ENCODE measurements at regions of chr9 and their contacts with region 1.

Region 1: DNA sequence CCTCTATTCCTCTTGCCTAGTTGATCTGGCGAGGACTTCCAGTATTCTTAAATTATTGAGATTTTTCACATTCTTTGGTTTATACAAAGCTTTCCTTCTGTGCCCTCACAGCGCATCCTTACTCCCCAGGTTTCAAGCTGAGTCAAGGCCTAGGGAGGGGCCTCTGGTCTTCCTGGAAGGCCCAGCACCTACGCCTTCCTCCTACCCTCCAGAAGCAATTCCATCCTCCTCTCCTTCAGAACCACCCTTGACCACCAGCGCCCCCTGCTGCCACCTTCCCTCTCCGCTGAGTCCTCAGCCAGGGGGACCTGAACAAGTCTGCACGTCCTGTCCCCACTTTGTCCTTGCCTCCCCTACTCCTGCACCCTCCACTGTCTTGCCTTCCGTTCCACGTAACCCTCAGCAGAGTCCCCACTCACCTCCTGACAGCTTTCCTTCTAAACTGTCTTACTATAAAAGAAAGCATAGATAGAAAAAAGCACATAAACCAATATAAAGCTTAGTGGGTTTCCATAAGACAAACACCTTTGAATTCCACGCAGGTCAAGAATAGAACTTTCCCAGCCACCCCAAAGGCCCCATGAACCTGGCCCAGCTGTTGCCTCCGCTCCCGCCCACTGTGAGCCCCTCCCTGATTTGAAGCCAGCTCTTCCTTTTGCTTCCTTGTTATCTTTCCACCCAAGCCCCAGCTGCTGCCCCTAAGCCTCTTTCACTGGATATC is 63.0 kb upstream of the CTSL start:
- DNase-seq: peak; percentile 77
- H3K4me3 ChIP-seq: no peak overlapping the region
- H3K27ac ChIP-seq: no peak overlapping the region
- H3K4me1 ChIP-seq: no peaks in the 10 kb centered on the region
- H3K27me3 ChIP-seq: no peaks in the 10 kb centered on the region
- CTCF ChIP-seq: peak; percentile 83

Region 2: DNA sequence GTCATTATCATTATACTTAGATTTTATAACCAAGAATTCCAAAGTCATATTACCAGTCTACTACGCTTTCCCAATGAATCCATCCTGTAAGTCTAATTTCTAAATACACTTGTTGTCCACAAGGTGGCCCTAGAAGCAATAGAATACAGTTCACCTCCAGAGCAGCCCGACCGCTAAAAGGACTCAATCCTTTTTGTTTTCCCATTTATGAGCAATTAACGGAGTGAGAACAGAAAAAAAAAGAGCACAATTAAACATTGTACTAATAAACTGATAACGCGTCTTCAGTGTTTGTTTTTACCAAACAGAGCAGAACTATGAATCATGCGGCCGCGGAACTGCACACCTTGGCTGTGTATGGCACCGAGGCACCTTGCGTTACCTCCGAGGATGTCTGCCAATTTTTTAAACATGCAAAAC is 326.0 kb before region 1 on chr9:
- intact Hi-C with region 1: loop called (anchors 5 kb)
- DNase-seq: no peak
- H3K4me3 ChIP-seq: peak overlapping the region; percentile 52
- H3K27ac ChIP-seq: no peak overlapping the region
- H3K4me1 ChIP-seq: peaks cover 11% of the 10 kb centered on the region
- H3K27me3 ChIP-seq: peaks cover 56% of the 10 kb centered on the region
- CTCF ChIP-seq: peak; percentile 79

Region 3: DNA sequence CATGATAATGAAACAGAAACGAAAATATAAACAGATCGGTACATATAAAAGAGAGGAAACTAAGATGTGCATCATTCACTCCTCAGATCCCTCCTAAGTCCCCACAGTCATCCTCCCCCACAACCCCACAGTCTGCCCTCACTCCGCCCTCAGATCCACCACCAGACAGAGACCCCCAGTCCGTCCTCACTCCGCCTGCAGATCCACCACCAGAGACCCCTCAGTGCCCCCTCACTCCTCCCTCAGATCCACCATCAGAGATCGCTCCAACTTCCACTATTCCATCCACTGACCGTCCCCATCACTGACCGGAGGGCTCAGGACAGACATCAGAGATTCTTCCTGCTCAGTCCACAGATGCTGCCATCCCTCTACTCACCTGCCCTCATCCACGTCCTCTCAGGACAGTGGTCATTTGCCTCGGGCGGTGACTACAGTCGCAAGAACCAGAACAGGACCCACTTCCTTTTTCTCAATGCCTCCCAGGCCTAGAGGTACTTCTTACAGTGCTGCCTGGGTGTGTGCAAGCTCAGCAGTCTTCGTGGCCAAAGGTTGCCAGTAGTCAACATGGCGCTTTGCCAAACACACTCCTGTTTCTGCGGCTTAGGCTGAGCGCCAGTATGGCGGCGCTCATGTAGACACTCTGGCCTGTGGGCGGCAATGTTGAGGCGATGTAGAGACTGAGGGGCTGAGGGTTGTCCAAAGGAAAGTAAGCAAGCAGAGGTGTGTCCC is 246.5 kb after region 1 on chr9:
- intact Hi-C with region 1: no loop called
- DNase-seq: no peak
- H3K4me3 ChIP-seq: no peak overlapping the region
- H3K27ac ChIP-seq: no peak overlapping the region
- H3K4me1 ChIP-seq: no peaks in the 10 kb centered on the region
- H3K27me3 ChIP-seq: no peaks in the 10 kb centered on the region
- CTCF ChIP-seq: no peak

Measured in left ventricle myocardium inferior (tissue), 1 donor.